H1 (cell line): ENCODE measurements at regions of chr12 and their contacts with region 1.

Region 1: DNA sequence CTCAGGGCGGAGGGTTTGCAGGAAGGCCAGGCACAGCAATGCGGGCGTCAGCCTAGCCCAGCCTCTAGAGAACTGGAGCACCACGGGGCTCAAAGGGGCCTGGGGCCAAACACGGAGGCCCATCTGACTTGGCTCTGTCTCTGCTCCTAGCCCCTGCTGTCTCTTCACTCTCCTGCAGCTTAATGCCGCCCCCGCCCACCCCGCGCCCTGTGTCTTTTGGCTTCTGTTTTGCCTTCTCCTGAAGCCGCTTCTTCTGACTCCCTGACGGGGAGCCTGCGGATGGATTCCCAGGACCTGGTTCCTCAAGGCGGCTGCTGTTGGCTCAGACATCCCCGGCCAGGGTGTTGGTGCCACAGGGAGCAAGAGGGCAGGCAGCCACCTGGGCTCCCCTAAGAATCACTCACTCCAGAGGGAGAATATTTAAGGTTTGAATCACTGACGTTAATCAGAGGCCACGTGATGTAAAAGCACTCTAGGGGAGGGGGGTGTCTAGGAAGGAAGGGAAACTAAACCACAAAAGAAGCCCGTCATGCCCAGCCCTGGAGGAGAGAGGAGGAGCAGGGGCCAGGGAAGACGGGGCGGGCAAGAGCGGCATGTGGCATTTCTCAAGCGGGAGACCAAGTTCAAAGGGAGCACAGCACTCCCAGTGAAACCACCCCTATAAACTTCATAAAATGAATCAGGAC is 36.9 kb upstream of the PRMT8 start:
- DNase-seq: no peak
- H3K4me3 ChIP-seq: no peak overlapping the region
- H3K27ac ChIP-seq: no peak overlapping the region
- H3K4me1 ChIP-seq: peaks cover 0 to 11% (median 4%) of the 10 kb centered on the region in 4 experiments; a peak in 3 of 7 replicates
- H3K27me3 ChIP-seq: peaks cover 0 to 6% (median 4%) of the 10 kb centered on the region in 4 experiments; a peak in 4 of 7 replicates
- CTCF ChIP-seq: no peak
- EP300 ChIP-seq: no peak
- POLR2A ChIP-seq: no peak
- RAD21 ChIP-seq: no peak

Region 2: DNA sequence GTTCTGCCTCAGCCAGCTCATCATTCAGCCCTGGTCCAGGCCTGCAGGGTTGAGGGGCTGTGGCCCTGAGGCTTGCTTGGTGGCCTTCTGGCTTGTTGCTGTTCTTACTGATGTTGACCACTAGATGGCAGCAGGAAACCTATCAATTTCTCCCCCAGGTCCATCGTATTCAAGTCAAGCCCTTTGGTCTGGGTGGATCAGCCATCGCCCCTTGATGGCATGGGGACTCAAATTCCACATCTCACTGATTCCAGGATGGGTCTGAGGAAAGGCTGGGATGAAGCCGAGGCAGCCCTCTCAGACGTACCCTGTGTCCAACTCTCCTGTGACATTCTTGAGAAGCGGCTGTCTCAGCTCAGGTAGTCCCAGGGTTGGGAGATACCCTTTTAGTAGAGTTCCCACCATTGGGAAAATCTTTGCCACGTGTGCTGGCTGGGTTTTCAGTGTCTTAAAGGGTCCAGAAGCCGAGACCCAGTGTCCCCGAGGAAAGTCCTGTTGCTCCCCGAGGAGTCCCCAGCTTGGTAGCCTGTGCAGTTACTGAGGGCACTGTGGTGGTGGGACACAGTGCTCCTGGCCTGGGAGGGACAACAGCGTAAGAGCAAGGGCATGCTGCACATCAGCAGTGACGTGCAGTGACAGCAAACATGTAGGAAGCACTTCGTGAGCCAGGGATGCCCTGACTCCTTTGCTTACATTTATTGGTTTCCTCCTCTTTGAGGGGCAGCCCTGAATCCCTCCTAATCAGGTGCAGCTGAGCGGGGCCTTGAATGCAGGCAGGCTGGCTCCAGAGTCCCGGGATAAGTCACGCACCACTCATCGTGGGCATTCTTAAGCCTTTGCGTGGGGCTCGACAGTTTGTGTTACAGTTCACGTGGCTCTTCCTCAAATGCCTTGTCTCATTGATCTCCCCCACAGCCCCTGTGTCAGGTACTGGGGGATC is 318.3 kb before region 1 on chr12:
- CTCF ChIA-PET with region 1: no interaction called
- POLR2A ChIA-PET with region 1: no interaction called
- DNase-seq: peak; percentile 58 to 63
- H3K4me3 ChIP-seq: no peak overlapping the region
- H3K27ac ChIP-seq: no peak overlapping the region
- H3K4me1 ChIP-seq: peaks cover 2 to 32% (median 20%) of the 10 kb centered on the region in 4 experiments
- H3K27me3 ChIP-seq: no peaks in the 10 kb centered on the region
- CTCF ChIP-seq: peak in 2 of 3 experiments; percentile 88 to 93; a peak in 3 of 4 replicates
- EP300 ChIP-seq: no peak
- POLR2A ChIP-seq: no peak
- RAD21 ChIP-seq: peak; percentile 97 to 99

Region 3: DNA sequence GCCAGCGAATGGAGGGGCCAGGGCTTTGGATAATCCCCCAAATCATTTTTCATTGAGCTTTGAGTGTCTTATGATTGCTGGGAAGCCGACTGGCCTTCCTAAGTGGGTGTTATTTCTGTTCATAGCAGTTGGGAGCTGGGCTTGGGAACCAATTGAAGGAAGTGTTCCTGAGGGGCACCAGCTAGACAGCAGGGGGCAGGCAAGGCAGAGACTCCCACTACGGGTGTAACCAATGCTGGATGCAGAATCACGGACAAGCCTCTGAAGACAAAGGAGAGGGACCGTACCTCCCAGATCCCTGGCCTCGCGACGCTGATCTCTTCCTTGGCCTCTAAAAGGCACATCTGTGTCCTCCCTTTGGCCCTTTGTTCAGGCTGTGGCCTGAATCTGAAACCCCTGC is 112.1 kb before region 1 on chr12:
- CTCF ChIA-PET with region 1: interaction called, 21 read pairs
- POLR2A ChIA-PET with region 1: no interaction called
- DNase-seq: peak in 1 of 2 experiments; percentile 21
- H3K4me3 ChIP-seq: no peak overlapping the region
- H3K27ac ChIP-seq: no peak overlapping the region
- H3K4me1 ChIP-seq: peaks cover 0 to 11% (median 3%) of the 10 kb centered on the region in 4 experiments; a peak in 4 of 7 replicates
- H3K27me3 ChIP-seq: peaks cover 0 to 3% (median 0%) of the 10 kb centered on the region in 4 experiments; a peak in 1 of 7 replicates
- CTCF ChIP-seq: peak; percentile 28 to 49 (median 49); a peak in 3 of 4 replicates
- EP300 ChIP-seq: no peak
- POLR2A ChIP-seq: no peak
- RAD21 ChIP-seq: peak; percentile 49 to 65

Region 4: GRCh38 chr12:3418609-3419390 is 35.3 kb before region 1 on chr12:
- CTCF ChIA-PET with region 1: interaction called, 12 read pairs
- POLR2A ChIA-PET with region 1: no interaction called
- DNase-seq: no peak
- H3K4me3 ChIP-seq: no peak overlapping the region
- H3K27ac ChIP-seq: no peak overlapping the region
- H3K4me1 ChIP-seq: peaks cover 8 to 17% (median 11%) of the 10 kb centered on the region in 4 experiments
- H3K27me3 ChIP-seq: peaks cover 1 to 9% (median 6%) of the 10 kb centered on the region in 4 experiments; a peak in 5 of 7 replicates
- CTCF ChIP-seq: no peak
- EP300 ChIP-seq: no peak
- POLR2A ChIP-seq: no peak
- RAD21 ChIP-seq: no peak

Region 5: DNA sequence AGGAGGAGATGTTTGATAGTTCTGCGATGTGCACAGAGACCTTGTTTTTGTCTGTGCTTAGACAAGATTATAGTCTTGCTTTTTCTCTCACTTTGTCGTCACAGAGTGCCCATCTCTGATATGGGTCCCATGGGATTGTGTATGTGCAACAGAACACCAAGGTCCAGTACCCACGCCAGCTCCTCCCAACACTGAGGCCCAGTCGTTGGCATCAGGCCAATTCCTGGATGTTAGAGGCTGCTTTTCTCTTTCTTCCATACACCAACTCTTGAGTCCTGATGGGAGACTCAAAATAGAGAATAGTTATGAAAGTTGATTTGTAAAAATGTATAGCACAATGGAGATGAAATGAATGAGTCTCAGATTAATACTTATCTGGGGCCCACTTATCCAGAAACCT is 14.2 kb after region 1 on chr12:
- CTCF ChIA-PET with region 1: interaction called, 17 read pairs
- POLR2A ChIA-PET with region 1: interaction called, 3 read pairs
- DNase-seq: no peak
- H3K4me3 ChIP-seq: no peak overlapping the region
- H3K27ac ChIP-seq: no peak overlapping the region
- H3K4me1 ChIP-seq: peaks cover 0 to 2% (median 0%) of the 10 kb centered on the region in 4 experiments; a peak in 1 of 7 replicates
- H3K27me3 ChIP-seq: no peaks in the 10 kb centered on the region; a peak in 1 of 7 replicates
- CTCF ChIP-seq: peak in 2 of 3 experiments; percentile 2 to 21; a peak in 2 of 4 replicates
- EP300 ChIP-seq: no peak
- POLR2A ChIP-seq: no peak
- RAD21 ChIP-seq: peak; percentile 25 to 37; a peak in 3 of 4 replicates

Region 6: GRCh38 chr12:3753544-3754284 is 299.6 kb after region 1 on chr12:
- CTCF ChIA-PET with region 1: no interaction called
- POLR2A ChIA-PET with region 1: no interaction called
- DNase-seq: peak in 1 of 2 experiments; percentile 44
- H3K4me3 ChIP-seq: peak overlapping the region in 3 of 4 experiments; percentile 14 to 54 (median 32); a peak in 4 of 8 replicates
- H3K27ac ChIP-seq: no peak overlapping the region
- H3K4me1 ChIP-seq: peaks cover 0 to 4% (median 3%) of the 10 kb centered on the region in 4 experiments; a peak in 5 of 7 replicates
- H3K27me3 ChIP-seq: peaks cover 0 to 16% (median 12%) of the 10 kb centered on the region in 4 experiments; a peak in 6 of 7 replicates
- CTCF ChIP-seq: no peak
- EP300 ChIP-seq: no peak
- POLR2A ChIP-seq: no peak
- RAD21 ChIP-seq: no peak